Activated naive CD4-positive, alpha-beta T cell treated with anti-CD3 and anti-CD28 coated beads for 36 hours (primary cell): ENCODE measurements at regions of chr6 and their contacts with region 1.

Region 1: DNA sequence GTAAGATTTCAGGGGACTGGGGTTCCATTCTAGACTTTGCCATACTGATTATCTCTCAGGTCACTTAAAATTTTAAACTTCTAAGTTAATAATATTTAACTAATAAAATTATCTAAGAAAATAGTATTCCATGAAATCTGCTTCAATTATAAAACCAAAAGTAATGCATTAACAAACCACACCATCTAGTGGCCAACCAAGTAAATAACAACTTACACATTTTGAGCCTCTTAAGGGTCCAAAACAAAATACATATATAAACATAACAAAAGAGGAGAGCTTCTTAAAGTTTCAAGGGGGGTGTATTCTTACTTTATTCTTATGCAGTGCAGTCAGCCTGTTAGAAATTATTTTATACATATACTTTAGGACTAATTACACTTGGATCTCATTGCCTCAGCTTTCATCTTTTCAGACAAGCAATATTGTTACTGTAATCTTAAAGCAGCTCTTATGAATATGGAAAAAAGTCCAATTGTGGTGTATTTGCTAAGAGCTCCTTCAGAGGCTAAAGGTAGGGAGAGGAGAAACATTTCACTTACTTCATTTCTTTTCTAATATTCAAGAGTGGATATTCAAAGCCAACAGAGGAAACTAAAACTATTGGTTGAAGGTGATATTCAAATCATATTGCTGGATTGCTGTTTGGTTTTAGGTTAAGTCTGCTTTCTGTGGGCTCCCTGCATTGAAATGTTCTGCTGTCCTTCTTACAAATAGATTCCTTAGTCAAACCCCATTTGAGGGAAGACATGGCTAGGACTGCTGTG is 199.7 kb upstream of the SIM1 start:
- DNase-seq: no peak
- H3K4me3 Mint-ChIP-seq: no peak overlapping the region
- H3K27ac Mint-ChIP-seq: no peak overlapping the region
- H3K4me1 Mint-ChIP-seq: peaks cover 8% of the 10 kb centered on the region
- H3K27me3 Mint-ChIP-seq: no peaks in the 10 kb centered on the region

Region 2: GRCh38 chr6:100001915-100002388 is 662.5 kb before region 1 on chr6:
- CTCF ChIA-PET with region 1: interaction called, 3 read pairs
- intact Hi-C with region 1: loop called (anchors 5 kb)
- DNase-seq: peak; percentile 51
- H3K4me3 Mint-ChIP-seq: no peak overlapping the region
- H3K27ac Mint-ChIP-seq: no peak overlapping the region
- H3K4me1 Mint-ChIP-seq: no peaks in the 10 kb centered on the region
- H3K27me3 Mint-ChIP-seq: peaks cover 18% of the 10 kb centered on the region

Region 3: GRCh38 chr6:100105138-100105753 is 559.2 kb before region 1 on chr6:
- CTCF ChIA-PET with region 1: no interaction called
- intact Hi-C with region 1: loop called (anchors 2 kb)
- DNase-seq: no peak
- H3K4me3 Mint-ChIP-seq: no peak overlapping the region
- H3K27ac Mint-ChIP-seq: no peak overlapping the region
- H3K4me1 Mint-ChIP-seq: no peaks in the 10 kb centered on the region
- H3K27me3 Mint-ChIP-seq: peaks cover 7% of the 10 kb centered on the region

Region 4: DNA sequence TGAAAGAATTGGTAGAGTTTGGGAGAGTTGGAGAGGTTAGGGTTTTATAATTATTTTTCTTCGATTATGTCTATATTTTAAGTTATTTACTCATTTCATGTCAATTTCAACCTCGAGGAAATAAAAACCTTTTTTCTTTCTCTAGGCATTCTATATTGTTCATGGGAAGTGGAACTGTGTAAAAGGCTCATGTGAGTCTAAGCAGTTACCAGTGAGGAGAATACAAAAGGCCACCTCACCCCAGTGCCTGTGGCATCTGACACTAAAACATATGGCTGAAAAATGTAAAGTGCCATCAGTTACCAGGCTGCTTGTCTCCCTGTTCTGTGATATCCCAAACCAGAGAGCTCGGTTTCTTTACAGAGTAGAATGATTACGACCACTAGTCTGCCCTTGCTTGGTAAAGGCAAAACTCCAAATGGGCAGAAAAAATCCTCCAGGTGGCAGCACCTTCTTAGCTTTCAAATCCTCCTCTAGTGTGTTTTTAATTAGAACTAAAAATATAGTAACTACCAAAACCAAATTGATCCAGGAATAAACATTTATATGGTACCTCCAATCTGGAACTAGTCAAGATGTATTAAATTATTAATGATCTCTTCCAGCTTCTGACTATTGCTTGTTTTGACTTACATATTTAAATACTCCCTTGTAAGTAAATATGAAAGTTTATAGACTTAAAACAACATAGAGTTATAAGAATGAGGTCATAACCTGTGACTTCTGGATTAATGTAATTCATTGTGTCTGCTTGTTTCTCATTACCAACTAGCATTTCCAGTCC is 547.9 kb before region 1 on chr6:
- CTCF ChIA-PET with region 1: interaction called, 3 read pairs
- intact Hi-C with region 1: loop called (anchors 2 kb)
- DNase-seq: peak; percentile 42
- H3K4me3 Mint-ChIP-seq: no peak overlapping the region
- H3K27ac Mint-ChIP-seq: no peak overlapping the region
- H3K4me1 Mint-ChIP-seq: no peaks in the 10 kb centered on the region
- H3K27me3 Mint-ChIP-seq: peaks cover 9% of the 10 kb centered on the region

Region 5: DNA sequence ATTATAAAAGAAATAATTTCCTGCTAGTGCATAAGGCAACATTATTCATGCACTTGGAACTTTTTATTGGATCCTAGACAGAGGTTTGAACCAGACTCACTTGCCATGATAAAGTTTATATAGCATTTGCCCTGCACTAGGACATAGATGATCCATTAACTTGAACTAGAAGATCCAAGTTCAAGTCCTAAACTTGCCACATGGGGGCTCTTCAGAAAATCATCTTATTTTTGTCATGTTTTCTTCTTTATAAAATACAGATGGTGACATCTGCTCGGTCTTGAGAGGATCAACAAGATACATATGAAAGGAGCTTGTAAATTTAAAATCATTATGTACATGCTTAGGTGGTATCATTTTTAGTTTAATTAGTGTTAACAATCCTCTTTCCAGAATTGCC is 294.2 kb before region 1 on chr6:
- CTCF ChIA-PET with region 1: no interaction called
- intact Hi-C with region 1: loop called (anchors 10 kb)
- DNase-seq: no peak
- H3K4me3 Mint-ChIP-seq: no peak overlapping the region
- H3K27ac Mint-ChIP-seq: no peak overlapping the region
- H3K4me1 Mint-ChIP-seq: no peaks in the 10 kb centered on the region
- H3K27me3 Mint-ChIP-seq: no peaks in the 10 kb centered on the region